A673 (cell line): ENCODE measurements at regions of chr13 and their contacts with region 1.

Region 1: DNA sequence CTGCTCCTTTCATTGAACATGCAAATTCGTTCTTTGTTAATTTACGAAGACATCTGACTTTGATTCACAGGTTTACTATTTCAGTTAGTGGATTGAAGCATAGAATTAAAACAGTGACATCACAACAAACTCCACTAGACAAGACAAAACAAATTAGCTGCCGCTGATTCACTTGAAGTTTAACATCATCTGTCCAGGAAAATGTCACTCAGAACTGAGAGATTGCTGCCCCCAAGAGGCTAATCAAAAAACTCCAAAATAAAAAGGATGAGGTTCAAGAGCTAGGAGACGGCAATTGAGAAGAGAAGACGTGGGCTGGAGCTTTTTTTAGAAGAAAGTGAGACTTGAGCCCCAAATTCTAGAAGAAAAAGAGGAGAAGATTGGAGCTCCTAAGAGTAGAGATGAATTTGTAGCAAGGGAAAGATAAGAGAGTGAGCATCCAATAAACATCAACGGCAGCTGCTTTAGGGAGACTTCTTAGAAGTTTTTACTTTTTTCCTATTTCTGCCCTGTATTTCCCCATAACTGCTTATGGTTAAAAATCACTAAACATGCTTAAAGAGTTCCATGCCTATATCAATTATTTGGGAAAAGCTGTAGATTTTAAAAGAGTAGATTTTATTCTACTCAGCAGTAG is 40.8 kb upstream of the TPP2 start:
- DNase-seq: peak; percentile 84
- H3K4me3 ChIP-seq: peak overlapping the region; percentile 31
- H3K27ac ChIP-seq: no peak overlapping the region
- H3K4me1 ChIP-seq: peaks cover 4% of the 10 kb centered on the region
- H3K27me3 ChIP-seq: no peaks in the 10 kb centered on the region
- CTCF ChIP-seq: peak; percentile 67

Region 2: GRCh38 chr13:101514788-101515187 is 1041.2 kb before region 1 on chr13:
- CTCF ChIA-PET with region 1: no interaction called
- POLR2A ChIA-PET with region 1: no interaction called
- intact Hi-C with region 1: loop called (anchors 10 kb)
- DNase-seq: peak; percentile 68
- H3K4me3 ChIP-seq: no peak overlapping the region
- H3K27ac ChIP-seq: no peak overlapping the region
- H3K4me1 ChIP-seq: peaks cover 36% of the 10 kb centered on the region
- H3K27me3 ChIP-seq: no peaks in the 10 kb centered on the region
- CTCF ChIP-seq: peak; percentile 85

Region 3: GRCh38 chr13:102028868-102029267 is 527.2 kb before region 1 on chr13:
- CTCF ChIA-PET with region 1: no interaction called
- POLR2A ChIA-PET with region 1: no interaction called
- intact Hi-C with region 1: no loop called
- DNase-seq: no peak
- H3K4me3 ChIP-seq: no peak overlapping the region
- H3K27ac ChIP-seq: no peak overlapping the region
- H3K4me1 ChIP-seq: peaks cover 5% of the 10 kb centered on the region
- H3K27me3 ChIP-seq: no peaks in the 10 kb centered on the region
- CTCF ChIP-seq: no peak

Region 4: GRCh38 chr13:102141625-102142472 is 414.2 kb before region 1 on chr13:
- CTCF ChIA-PET with region 1: interaction called, 7 read pairs
- POLR2A ChIA-PET with region 1: no interaction called
- intact Hi-C with region 1: loop called (anchors 1 kb)
- DNase-seq: peak; percentile 66
- H3K4me3 ChIP-seq: no peak overlapping the region
- H3K27ac ChIP-seq: no peak overlapping the region
- H3K4me1 ChIP-seq: peaks cover 23% of the 10 kb centered on the region
- H3K27me3 ChIP-seq: no peaks in the 10 kb centered on the region
- CTCF ChIP-seq: peak; percentile 87

Region 5: DNA sequence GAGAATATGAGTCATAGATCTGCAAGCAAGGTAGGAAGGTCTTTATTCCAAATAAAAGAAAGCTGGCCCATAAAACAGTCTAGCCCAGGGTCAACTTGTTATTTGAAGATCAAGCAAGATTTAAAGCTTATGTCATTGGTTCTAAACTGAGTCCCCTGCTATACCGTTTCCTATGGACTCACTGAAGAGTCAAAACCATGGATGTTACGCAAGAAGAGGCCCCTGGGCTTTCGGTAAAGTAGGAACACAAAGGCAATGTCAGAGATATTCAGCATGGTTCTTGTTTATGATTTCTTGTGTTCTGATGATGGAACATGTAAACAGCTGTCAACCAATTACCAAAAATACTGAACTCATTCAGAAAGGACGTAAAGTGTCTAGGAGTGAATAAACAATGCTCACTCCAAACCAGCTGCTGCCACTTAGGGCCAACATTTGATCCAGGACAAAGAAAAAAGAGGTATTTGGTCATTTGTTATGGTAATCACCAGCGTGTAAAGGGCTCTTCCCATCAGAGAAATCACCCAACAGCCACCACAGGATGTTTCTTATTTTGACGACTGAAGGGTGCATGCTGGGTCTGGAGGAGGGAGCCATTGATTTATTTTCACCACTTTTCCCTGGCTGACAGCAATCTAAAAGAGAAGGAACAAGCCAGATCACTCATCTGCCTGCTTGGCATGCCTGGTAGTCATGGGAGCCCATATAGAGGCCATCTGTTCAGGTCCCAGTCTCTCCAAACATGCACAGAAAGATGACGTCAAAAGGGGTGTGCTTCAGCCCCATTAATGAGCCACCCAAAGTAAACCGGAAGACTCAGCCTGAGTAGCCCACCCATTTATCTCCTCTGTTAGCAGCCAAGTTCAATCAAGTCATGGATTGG is 222.5 kb before region 1 on chr13:
- CTCF ChIA-PET with region 1: no interaction called
- POLR2A ChIA-PET with region 1: no interaction called
- intact Hi-C with region 1: loop called (anchors 5 kb)
- DNase-seq: peak; percentile 30
- H3K4me3 ChIP-seq: no peak overlapping the region
- H3K27ac ChIP-seq: no peak overlapping the region
- H3K4me1 ChIP-seq: peaks cover 18% of the 10 kb centered on the region
- H3K27me3 ChIP-seq: no peaks in the 10 kb centered on the region
- CTCF ChIP-seq: no peak

Region 6: GRCh38 chr13:102460801-102461200 is 95.2 kb before region 1 on chr13:
- CTCF ChIA-PET with region 1: no interaction called
- POLR2A ChIA-PET with region 1: no interaction called
- intact Hi-C with region 1: loop called (anchors 5 kb)
- DNase-seq: no peak
- H3K4me3 ChIP-seq: no peak overlapping the region
- H3K27ac ChIP-seq: no peak overlapping the region
- H3K4me1 ChIP-seq: peaks cover 6% of the 10 kb centered on the region
- H3K27me3 ChIP-seq: no peaks in the 10 kb centered on the region
- CTCF ChIP-seq: no peak

Region 7: DNA sequence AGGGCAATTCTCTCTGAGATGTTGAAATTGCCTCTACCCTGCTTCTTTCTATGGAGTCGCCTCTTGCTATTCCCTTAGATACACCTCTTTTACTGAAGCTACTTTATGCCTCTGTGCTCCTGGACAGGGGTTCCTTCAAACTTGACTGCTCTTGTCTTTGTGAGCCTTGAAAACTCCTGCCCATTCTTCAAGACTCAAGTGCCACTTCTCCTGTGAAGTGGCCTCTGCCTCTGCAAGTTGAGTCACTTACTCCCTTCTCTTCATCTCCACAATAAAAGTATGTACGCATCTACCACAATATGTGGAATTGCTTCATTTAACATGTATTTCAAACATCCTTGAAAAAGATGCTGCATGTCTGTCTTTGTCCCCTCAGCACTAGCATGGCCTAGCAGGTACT is 25.3 kb before region 1 on chr13:
- CTCF ChIA-PET with region 1: no interaction called
- POLR2A ChIA-PET with region 1: no interaction called
- intact Hi-C with region 1: no loop called
- DNase-seq: no peak
- H3K4me3 ChIP-seq: no peak overlapping the region
- H3K27ac ChIP-seq: no peak overlapping the region
- H3K4me1 ChIP-seq: no peaks in the 10 kb centered on the region
- H3K27me3 ChIP-seq: no peaks in the 10 kb centered on the region
- CTCF ChIP-seq: no peak